PC-9 (cell line): ENCODE measurements at regions of chr1 and their contacts with region 1.

Region 1: DNA sequence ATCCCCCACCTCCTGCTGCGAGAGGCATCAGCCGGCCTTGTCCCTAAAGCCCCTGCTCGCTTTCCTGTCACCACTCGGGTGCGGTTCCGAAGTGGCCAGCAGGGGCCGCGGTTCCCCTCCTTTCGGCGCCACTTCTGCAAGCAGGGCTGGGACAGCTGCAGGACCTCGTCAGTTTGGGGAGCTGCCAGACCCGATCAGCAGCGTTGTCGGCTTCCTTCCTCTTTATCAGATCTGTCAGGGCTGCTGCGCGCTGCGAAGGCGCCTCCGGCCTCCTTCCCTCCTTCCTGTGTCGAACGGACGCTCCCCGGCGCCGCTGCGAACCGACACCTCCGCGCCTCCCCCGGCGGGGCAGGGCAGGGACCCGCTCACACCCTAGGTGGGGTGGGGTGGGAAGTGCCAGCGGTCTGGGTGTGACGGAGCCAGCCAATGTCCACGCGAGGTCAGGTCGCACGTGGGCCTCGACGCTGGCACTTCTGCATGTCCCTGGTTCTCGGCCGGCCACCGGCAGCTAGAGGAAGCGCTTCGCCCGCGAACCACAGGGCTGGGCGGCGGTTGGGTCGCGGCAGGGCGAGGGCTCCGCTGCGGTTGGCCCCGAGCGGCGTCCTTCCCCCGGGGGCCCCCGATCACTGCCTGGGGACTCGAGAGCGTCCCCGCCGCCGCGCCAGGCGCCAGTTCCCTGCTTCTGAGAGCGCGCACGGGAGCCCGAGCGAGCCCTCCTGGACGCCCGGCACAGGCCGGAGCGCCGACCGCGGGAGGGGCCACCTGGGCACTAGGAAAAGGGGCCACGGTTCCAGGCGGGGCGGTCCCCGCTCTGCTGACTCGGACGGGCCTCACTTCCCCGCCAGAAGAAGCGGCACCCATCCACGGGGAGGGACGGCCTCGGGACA is 81.8 kb downstream of the RUNX3 start:
- DNase-seq: peak; percentile 72 to 91
- H3K4me3 ChIP-seq: peak overlapping the region; percentile 58; the same call in 1 of the 2 replicates
- H3K27ac ChIP-seq: no peak overlapping the region
- H3K4me1 ChIP-seq: no peaks in the 10 kb centered on the region
- H3K27me3 ChIP-seq: no peaks in the 10 kb centered on the region
- CTCF ChIP-seq: peak; percentile 82

Region 2: GRCh38 chr1:24886241-24886640 is 38.0 kb after region 1 on chr1:
- CTCF ChIA-PET with region 1: no interaction called
- POLR2A ChIA-PET with region 1: no interaction called
- intact Hi-C with region 1: no loop called
- DNase-seq: no peak
- H3K4me3 ChIP-seq: no peak overlapping the region
- H3K27ac ChIP-seq: no peak overlapping the region
- H3K4me1 ChIP-seq: no peaks in the 10 kb centered on the region
- H3K27me3 ChIP-seq: no peaks in the 10 kb centered on the region
- CTCF ChIP-seq: no peak

Region 3: DNA sequence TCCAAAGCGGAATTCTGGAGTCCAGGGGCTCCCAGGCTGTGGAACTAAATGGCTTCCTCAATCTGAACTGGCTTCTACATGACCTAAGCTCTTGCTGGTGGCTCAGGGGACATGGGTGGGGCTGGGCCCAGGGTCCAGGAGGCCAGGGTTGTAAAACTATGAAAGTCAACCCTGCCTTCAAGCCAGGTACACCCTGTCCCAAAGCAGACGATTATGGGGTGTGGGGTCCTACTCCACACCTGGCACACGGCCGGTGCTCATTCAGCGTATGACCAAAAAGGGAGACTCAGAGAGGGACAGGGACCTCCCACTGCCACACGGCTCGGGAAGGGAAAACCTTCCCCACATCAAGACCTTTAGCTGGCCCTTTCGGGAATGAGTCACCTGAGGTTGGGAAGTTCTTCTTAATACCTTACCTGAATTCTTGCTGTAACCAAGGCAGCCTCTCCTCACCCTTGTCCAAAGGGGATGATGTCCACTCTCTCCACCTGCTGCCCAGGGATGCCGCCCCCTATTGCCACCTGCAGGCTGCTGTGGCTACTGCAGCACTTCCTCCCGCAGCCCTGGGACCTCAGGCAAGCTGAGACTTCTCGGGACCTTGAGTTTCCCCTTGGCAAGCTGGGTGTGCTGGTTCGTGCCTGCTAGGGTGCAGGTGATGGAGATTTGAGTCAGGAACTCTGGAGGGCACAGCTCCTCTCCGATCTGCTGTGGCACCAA is 49.7 kb after region 1 on chr1:
- CTCF ChIA-PET with region 1: interaction called, 8 read pairs
- POLR2A ChIA-PET with region 1: no interaction called
- intact Hi-C with region 1: loop called (anchors 1 kb)
- DNase-seq: peak in 1 of 2 experiments; percentile 56
- H3K4me3 ChIP-seq: no peak overlapping the region
- H3K27ac ChIP-seq: no peak overlapping the region
- H3K4me1 ChIP-seq: no peaks in the 10 kb centered on the region
- H3K27me3 ChIP-seq: peaks cover 36% of the 10 kb centered on the region
- CTCF ChIP-seq: peak; percentile 70

Region 4: GRCh38 chr1:24926563-24927249 is 78.5 kb after region 1 on chr1:
- CTCF ChIA-PET with region 1: interaction called, 12 read pairs
- POLR2A ChIA-PET with region 1: no interaction called
- intact Hi-C with region 1: no loop called
- DNase-seq: no peak
- H3K4me3 ChIP-seq: no peak overlapping the region
- H3K27ac ChIP-seq: no peak overlapping the region
- H3K4me1 ChIP-seq: no peaks in the 10 kb centered on the region
- H3K27me3 ChIP-seq: peaks cover 9% of the 10 kb centered on the region; the same call in 1 of the 2 replicates
- CTCF ChIP-seq: no peak

Region 5: GRCh38 chr1:24939040-24939674 is 90.9 kb after region 1 on chr1:
- CTCF ChIA-PET with region 1: no interaction called
- POLR2A ChIA-PET with region 1: no interaction called
- intact Hi-C with region 1: no loop called
- DNase-seq: no peak
- H3K4me3 ChIP-seq: no peak overlapping the region
- H3K27ac ChIP-seq: no peak overlapping the region
- H3K4me1 ChIP-seq: no peaks in the 10 kb centered on the region
- H3K27me3 ChIP-seq: peaks cover 9% of the 10 kb centered on the region
- CTCF ChIP-seq: no peak

Region 6: GRCh38 chr1:25037174-25038074 is 189.2 kb after region 1 on chr1:
- CTCF ChIA-PET with region 1: no interaction called
- POLR2A ChIA-PET with region 1: no interaction called
- intact Hi-C with region 1: loop called (anchors 1 kb)
- DNase-seq: peak in 1 of 2 experiments; percentile 22
- H3K4me3 ChIP-seq: no peak overlapping the region
- H3K27ac ChIP-seq: no peak overlapping the region
- H3K4me1 ChIP-seq: no peaks in the 10 kb centered on the region
- H3K27me3 ChIP-seq: peaks cover 15% of the 10 kb centered on the region
- CTCF ChIP-seq: peak; percentile 74

Region 7: DNA sequence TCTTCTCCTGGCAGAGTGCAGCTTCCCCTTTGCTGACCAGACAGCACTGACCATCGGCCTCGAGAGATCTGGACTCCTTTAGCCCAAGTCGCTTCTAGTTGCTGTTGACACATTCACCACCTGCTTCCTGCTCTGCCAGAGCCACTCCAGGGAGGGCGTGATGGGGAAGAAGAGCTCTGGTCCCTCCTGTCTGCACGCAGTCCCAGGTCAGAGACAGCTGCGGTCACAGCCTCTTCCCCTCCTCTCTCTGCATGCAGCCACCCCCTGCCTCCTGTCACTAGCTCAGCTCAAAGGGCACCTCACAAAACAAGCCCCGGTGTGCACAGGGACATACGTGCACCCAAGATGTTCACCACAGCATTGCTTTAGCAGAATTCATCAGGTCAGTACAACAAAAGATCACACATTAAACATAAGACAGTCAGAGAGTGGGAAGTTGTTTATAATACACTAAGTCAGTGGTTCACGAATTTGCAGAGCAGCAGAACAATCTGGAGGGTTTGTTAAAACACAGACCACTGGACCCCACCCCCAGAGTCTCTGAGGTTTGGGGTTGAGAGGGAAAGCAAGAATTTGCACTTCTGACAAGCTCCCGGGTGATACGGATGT is 251.2 kb after region 1 on chr1:
- CTCF ChIA-PET with region 1: interaction called, 3 read pairs
- POLR2A ChIA-PET with region 1: no interaction called
- intact Hi-C with region 1: loop called (anchors 1 kb)
- DNase-seq: no peak
- H3K4me3 ChIP-seq: no peak overlapping the region
- H3K27ac ChIP-seq: no peak overlapping the region
- H3K4me1 ChIP-seq: peaks cover 6% of the 10 kb centered on the region
- H3K27me3 ChIP-seq: peaks cover 5% of the 10 kb centered on the region; the same call in 1 of the 2 replicates
- CTCF ChIP-seq: no peak

Region 8: GRCh38 chr1:25204797-25205480 is 356.7 kb after region 1 on chr1:
- CTCF ChIA-PET with region 1: interaction called, 3 read pairs
- POLR2A ChIA-PET with region 1: no interaction called
- intact Hi-C with region 1: loop called (anchors 1 kb)
- DNase-seq: peak in 1 of 2 experiments; percentile 15
- H3K4me3 ChIP-seq: no peak overlapping the region
- H3K27ac ChIP-seq: no peak overlapping the region
- H3K4me1 ChIP-seq: no peaks in the 10 kb centered on the region
- H3K27me3 ChIP-seq: 0 out of 2 replicates have a peak, but pooled peaks cover 3% of the 10 kb centered on the region
- CTCF ChIP-seq: peak; percentile 78

Region 9: DNA sequence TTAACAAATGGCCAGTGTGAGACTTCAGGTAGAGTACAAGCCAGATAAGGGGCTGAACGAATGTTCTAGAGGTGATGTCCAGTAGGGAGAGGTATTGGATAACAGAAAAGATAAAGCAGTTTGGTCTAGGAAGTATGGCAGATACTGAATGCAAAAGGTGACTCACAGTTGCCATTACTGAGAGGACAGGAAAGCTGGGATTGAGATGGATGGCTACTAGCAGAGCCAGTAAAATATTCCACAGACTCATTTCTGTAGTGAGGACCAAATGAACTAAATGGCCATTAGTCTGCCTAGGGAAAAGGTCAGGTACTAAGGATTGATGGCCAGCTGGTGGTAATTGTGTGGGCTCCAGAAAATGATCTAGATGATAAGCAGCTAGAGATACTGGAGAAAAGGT is 593.9 kb after region 1 on chr1:
- CTCF ChIA-PET with region 1: no interaction called
- POLR2A ChIA-PET with region 1: no interaction called
- intact Hi-C with region 1: no loop called
- DNase-seq: no peak
- H3K4me3 ChIP-seq: no peak overlapping the region
- H3K27ac ChIP-seq: no peak overlapping the region
- H3K4me1 ChIP-seq: 0 out of 2 replicates have a peak, but pooled peaks cover 5% of the 10 kb centered on the region
- H3K27me3 ChIP-seq: no peaks in the 10 kb centered on the region
- CTCF ChIP-seq: 0 out of 2 replicates have a peak, but pooled peaks have one; percentile 18

Region 10: GRCh38 chr1:25487628-25488027 is 639.4 kb after region 1 on chr1:
- CTCF ChIA-PET with region 1: no interaction called
- POLR2A ChIA-PET with region 1: no interaction called
- intact Hi-C with region 1: no loop called
- DNase-seq: no peak
- H3K4me3 ChIP-seq: no peak overlapping the region
- H3K27ac ChIP-seq: no peak overlapping the region
- H3K4me1 ChIP-seq: no peaks in the 10 kb centered on the region
- H3K27me3 ChIP-seq: no peaks in the 10 kb centered on the region
- CTCF ChIP-seq: peak; percentile 56